ENCODE measurements at regions of chr4 and their contacts with region 1.

Region 1: DNA sequence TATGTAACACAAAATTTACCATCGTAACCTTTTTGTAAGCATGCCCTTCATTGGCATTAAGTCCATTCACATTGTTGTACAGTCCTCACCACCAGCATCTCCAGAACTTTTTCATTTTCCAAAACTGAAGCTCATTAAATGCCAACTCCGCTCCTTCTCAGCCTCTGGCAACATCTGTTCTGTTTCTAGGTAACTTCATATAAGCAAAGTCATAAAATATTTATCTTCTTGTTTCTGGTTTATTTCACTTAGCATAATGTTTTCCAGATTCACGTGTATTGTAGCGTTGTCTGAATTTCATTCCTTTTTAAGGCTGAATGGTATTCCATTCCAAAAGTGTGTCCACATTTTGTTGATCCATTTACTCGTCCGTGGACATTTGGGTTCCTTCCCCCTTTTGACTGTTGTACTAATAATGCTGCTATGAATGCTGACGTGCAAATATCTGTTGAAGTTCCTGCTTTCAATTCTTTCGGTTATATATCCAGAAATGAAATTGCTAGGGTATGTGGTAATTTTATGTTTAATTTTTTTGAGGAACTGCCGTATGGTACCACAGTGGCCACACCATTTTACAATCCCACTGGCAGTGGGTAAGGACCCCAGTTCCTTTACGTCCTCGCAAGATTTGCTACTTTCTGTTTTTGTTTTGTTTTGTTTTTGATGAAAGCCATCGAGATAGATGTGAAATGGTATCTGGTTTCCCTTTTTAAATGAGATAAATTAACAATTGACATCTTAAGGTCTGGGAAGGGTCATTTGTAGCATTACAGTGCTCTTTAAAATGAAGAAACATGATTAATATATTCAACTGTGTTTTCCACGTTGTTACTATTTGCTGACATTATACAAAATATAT is 63.4 kb downstream of the PTTG2 start:
- DNase-seq: no peak
- H3K4me3 ChIP-seq: no peak overlapping the region
- H3K27ac ChIP-seq: no peak overlapping the region
- H3K4me1 ChIP-seq: no peaks in the 10 kb centered on the region
- H3K27me3 ChIP-seq: no peaks in the 10 kb centered on the region
- CTCF ChIP-seq: no peak
- POLR2A ChIP-seq: no peak

Region 2: DNA sequence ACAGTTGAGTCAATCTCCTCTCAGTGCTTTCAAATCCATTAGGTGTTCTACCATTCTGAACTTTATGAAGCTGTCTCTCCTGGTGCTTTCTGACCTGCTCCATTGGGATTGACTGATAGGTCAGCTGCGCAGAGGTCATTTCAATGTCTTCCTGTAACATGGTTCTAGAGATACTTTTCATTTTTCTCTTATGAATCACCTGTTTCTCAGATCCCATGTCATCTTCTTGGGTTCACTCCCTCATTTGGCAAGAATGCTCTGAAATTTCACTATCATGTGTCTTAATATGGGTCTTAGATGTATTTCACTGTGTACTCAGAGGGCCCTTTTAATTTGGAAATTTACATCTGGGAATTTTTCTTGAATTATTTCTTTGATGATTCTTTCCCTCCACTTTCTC is 210.9 kb before region 1 on chr4:
- intact Hi-C with region 1: loop called (anchors 10 kb)
- DNase-seq: no peak
- H3K4me3 ChIP-seq: no peak overlapping the region
- H3K27ac ChIP-seq: no peak overlapping the region
- H3K4me1 ChIP-seq: no peaks in the 10 kb centered on the region
- H3K27me3 ChIP-seq: no peaks in the 10 kb centered on the region
- CTCF ChIP-seq: no peak
- POLR2A ChIP-seq: no peak

Region 3: DNA sequence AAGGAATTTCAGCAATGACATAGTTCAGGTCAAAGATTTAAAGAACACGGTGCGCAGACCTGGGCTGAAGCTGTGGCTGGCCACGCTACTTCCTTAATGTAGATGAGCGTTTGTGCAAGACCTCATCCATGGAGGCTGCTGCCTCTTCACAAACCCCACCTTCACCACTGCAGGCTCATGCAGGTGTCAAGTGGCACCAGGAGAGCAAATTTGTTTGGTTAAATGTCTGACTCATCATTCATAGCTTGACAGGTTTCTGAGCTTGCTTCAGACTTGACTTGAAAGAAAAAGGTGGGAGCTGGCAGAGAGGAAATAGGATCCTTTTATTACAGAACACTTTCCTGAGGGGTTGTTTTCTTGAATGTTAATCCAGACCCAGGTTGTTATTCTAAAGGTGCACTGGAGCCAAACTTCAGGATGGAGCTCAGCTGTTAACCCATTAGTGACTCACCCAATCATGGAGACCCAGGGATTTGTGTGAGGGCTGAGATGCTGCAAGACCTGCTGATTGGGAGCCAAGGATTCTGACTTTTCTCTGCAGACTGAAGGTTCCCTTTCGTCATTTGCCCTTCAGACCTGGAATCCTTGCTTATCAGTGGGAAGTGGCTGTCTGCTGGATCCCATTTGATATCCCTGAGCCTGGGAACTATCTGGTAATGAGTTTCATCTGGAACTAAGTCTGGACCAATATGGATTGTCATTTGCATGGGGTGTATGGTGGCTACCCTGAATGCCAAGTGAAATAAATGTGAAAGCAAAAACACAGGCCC is 251.9 kb after region 1 on chr4:
- intact Hi-C with region 1: no loop called
- DNase-seq: no peak
- H3K4me3 ChIP-seq: no peak overlapping the region
- H3K27ac ChIP-seq: no peak overlapping the region
- H3K4me1 ChIP-seq: no peaks in the 10 kb centered on the region
- H3K27me3 ChIP-seq: no peaks in the 10 kb centered on the region
- CTCF ChIP-seq: no peak
- POLR2A ChIP-seq: no peak

Measured in breast epithelium (tissue), 4 donors.